GM12878 (cell line): ENCODE measurements at regions of chr4 and their contacts with region 1.

Region 1: DNA sequence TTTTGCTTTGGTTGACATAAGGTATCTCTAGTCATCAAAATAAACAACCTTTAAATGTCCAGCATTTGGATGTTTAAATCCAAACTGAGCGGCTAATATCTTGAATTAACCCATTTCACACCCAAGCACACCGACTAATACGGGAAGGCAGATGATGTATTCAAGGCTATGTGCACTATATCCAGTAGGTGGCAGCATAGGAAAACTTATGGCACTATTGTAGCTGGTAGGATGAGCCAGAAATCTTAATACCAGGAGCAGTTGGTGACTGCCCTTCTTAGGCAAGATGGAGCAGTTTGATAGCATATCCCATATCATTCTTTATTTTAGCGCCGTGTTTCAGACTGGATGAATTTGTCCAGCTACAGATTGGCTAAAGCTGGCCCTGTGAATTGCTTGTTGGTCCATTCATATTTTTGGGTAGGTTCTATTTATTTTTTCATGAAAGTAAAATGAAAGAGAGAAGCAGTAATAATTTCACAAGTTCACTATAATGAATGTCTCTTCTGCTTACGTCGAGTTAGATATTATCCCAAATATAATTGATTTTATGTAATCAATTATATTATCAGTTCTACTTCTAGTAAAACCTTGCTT is 24.4 kb downstream of the UCHL1 start:
- DNase-seq: peak; percentile 48
- ATAC-seq: peak; percentile 99
- H3K4me3 ChIP-seq: no peak overlapping the region
- H3K27ac ChIP-seq: no peak overlapping the region
- H3K4me1 ChIP-seq: no peaks in the 10 kb centered on the region
- H3K27me3 ChIP-seq: no peaks in the 10 kb centered on the region
- CTCF ChIP-seq: peak; percentile 72 to 92 (median 90)
- EP300 ChIP-seq: no peak
- POLR2A ChIP-seq: no peak
- RAD21 ChIP-seq: peak; percentile 97

Region 2: GRCh38 chr4:41257257-41257901 is 23.8 kb before region 1 on chr4:
- CTCF ChIA-PET with region 1: interaction called, 22 read pairs
- POLR2A ChIA-PET with region 1: interaction called, 4 read pairs
- RAD21 ChIA-PET with region 1: no interaction called
- SMC1A ChIA-PET with region 1: interaction called, 3 read pairs
- in situ Hi-C with region 1: no loop called
- intact Hi-C with region 1: no loop called
- DNase-seq: no peak
- ATAC-seq: peak; percentile 63
- H3K4me3 ChIP-seq: peak overlapping the region; percentile 67
- H3K27ac ChIP-seq: no peak overlapping the region
- H3K4me1 ChIP-seq: peaks cover 3% of the 10 kb centered on the region; the same call in 1 of the 2 replicates
- H3K27me3 ChIP-seq: peaks cover 1 to 11% of the 10 kb centered on the region in 2 experiments
- CTCF ChIP-seq: no peak
- EP300 ChIP-seq: no peak
- POLR2A ChIP-seq: no peak; the same call in 1 of the 2 replicates
- RAD21 ChIP-seq: no peak

Region 3: GRCh38 chr4:41509451-41509866 is 228.3 kb after region 1 on chr4:
- CTCF ChIA-PET with region 1: no interaction called
- POLR2A ChIA-PET with region 1: no interaction called
- RAD21 ChIA-PET with region 1: no interaction called
- SMC1A ChIA-PET with region 1: no interaction called
- in situ Hi-C with region 1: no loop called
- intact Hi-C with region 1: no loop called
- DNase-seq: no peak
- ATAC-seq: no peak
- H3K4me3 ChIP-seq: no peak overlapping the region
- H3K27ac ChIP-seq: no peak overlapping the region
- H3K4me1 ChIP-seq: no peaks in the 10 kb centered on the region
- H3K27me3 ChIP-seq: no peaks in the 10 kb centered on the region
- CTCF ChIP-seq: no peak
- EP300 ChIP-seq: no peak
- POLR2A ChIP-seq: no peak
- RAD21 ChIP-seq: no peak

Region 4: DNA sequence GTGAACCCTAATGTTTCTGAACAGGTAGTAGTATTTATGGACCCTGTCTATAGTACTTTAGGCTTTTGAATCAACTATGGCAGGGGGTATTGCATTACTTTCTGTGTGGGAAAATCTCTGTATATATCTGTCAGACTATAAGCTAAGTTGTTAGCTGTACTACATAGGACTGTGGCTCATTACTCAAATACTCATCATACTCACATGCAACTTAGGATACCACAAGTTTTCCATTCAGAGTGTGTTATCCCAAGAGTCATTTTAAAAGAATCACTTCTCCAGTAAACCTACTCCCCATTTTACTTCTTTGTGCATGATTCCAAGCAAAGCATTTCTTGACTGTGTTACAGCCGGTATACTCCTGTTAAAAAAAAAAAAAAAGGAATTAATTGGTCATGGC is 371.8 kb after region 1 on chr4:
- CTCF ChIA-PET with region 1: interaction called, 17 read pairs
- POLR2A ChIA-PET with region 1: no interaction called
- RAD21 ChIA-PET with region 1: interaction called, 3 read pairs
- SMC1A ChIA-PET with region 1: interaction called, 3 read pairs
- in situ Hi-C with region 1: loop called (anchors 5 kb)
- intact Hi-C with region 1: no loop called
- DNase-seq: no peak
- ATAC-seq: no peak
- H3K4me3 ChIP-seq: no peak overlapping the region
- H3K27ac ChIP-seq: no peak overlapping the region
- H3K4me1 ChIP-seq: no peaks in the 10 kb centered on the region
- H3K27me3 ChIP-seq: no peaks in the 10 kb centered on the region
- CTCF ChIP-seq: no peak
- EP300 ChIP-seq: no peak
- POLR2A ChIP-seq: no peak
- RAD21 ChIP-seq: no peak

Region 5: DNA sequence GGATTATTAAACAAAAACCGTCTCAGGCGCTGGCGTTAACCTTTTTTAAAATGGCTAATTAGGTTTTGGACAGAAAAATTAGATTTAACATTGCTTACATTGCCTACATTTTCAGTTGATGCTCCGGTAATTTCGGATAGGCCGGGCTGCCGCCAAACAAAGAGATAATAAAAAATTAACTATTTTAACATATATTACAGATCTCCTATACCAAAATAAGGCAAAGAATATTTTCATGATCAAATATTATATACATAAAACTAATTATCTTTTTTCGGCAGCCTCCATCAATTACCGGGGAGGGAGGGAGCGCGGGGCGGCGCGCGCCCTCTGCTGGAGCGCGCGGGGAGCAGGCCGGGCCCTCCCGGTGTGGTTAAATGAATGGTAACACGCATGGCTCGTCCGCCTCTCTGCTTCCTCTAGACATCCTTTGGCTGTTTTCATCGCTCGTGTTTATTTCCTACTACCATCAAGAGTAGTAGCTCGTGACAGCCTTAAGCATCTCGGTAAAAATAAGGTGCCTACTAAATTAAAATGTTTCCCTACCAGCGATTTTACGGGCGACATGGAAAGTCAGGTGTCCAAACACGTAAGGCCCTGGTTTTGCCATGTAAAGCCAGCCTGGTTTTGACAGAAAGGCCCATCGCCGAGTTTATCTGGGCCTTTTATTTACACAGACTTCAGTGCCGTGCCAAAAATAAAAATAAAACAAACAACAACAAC is 601.6 kb after region 1 on chr4:
- CTCF ChIA-PET with region 1: interaction called, 22 read pairs
- POLR2A ChIA-PET with region 1: no interaction called
- RAD21 ChIA-PET with region 1: interaction called, 3 read pairs
- SMC1A ChIA-PET with region 1: interaction called, 5 read pairs
- in situ Hi-C with region 1: loop called (anchors 5 kb)
- intact Hi-C with region 1: loop called (anchors 2 kb)
- DNase-seq: no peak
- ATAC-seq: peak; percentile 99
- H3K4me3 ChIP-seq: no peak overlapping the region
- H3K27ac ChIP-seq: no peak overlapping the region
- H3K4me1 ChIP-seq: no peaks in the 10 kb centered on the region
- H3K27me3 ChIP-seq: peaks cover 19 to 22% of the 10 kb centered on the region in 2 experiments
- CTCF ChIP-seq: peak; percentile 81 to 91 (median 90)
- EP300 ChIP-seq: no peak
- POLR2A ChIP-seq: no peak
- RAD21 ChIP-seq: peak; percentile 78